ENCODE measurements at regions of chr5 and their contacts with region 1.

Region 1: GRCh38 chr5:134738133-134738962 is at the start of gene CAMLG:
- DNase-seq: peak; percentile 98
- H3K4me3 Mint-ChIP-seq: peak within 1 kb of the TSS; percentile 94
- H3K27ac Mint-ChIP-seq: peak within 1 kb of the TSS; percentile 90
- H3K4me1 Mint-ChIP-seq: peaks cover 32% of the 10 kb centered on the region
- H3K27me3 Mint-ChIP-seq: no peaks in the 10 kb centered on the region
- total RNA-seq, gene CAMLG: 25.9 and 26.9 TPM in 2 replicates

Region 2: GRCh38 chr5:133051580-133052332 is 1686.6 kb before region 1 on chr5 and contains the start of gene HSPA4:
- intact Hi-C with region 1: loop called (anchors 2 kb)
- DNase-seq: peak; percentile 96
- H3K4me3 Mint-ChIP-seq: peak within 1 kb of the TSS; percentile 96
- H3K27ac Mint-ChIP-seq: peak within 1 kb of the TSS; percentile 100
- H3K4me1 Mint-ChIP-seq: peaks cover 46% of the 10 kb centered on the region
- H3K27me3 Mint-ChIP-seq: peaks cover 2% of the 10 kb centered on the region
- total RNA-seq, gene HSPA4: 244 and 247 TPM in 2 replicates

Region 3: DNA sequence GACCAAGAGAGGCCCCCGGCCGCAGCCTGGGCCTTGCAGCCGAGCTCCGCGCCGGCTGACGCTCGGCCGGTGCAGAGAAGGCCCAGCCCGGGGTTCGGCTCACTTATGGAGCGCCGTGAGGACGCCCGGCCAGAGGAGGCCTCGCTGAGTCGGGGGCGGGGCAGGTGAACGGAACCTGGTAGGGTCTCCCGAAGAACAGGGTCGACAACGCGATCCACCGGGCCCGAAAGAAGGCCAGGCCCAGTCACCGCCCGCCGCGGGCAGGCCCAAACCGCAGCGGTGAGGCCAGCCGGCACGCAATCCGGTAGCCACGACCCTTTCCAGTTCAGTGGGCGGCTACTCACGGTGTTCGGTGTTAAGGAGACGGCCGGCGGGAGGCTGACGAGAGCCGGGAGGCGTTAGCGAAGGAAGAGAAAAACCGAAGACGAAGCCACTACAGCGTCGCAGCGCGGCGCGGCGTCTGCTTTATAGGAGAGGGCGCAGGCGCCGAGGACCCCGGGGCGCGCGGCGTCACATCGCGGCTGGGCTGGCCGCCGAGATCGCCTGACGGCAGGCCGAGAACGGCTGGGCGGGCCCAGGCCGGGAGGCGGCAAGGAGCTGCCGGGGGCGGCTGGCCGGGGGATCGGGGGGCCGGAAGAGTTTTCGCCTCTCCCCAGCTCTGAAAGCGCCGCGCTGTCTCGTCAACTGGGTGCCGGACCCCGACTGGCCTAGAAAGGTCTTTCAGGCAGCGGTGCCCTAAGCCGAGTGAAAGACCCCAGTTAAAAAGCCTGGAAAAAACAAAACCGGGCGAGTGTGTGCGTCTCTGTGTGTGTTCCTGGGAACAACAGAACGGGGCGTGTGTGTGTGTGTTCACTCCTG is 561.6 kb before region 1 on chr5 and contains the start of gene SKP1:
- intact Hi-C with region 1: loop called (anchors 1 kb)
- DNase-seq: peak; percentile 85
- H3K4me3 Mint-ChIP-seq: peak within 1 kb of the TSS; percentile 96
- H3K27ac Mint-ChIP-seq: peak within 1 kb of the TSS; percentile 97
- H3K4me1 Mint-ChIP-seq: peaks cover 28% of the 10 kb centered on the region
- H3K27me3 Mint-ChIP-seq: peaks cover 6% of the 10 kb centered on the region
- total RNA-seq, gene SKP1: 259 and 265 TPM in 2 replicates

Region 4: GRCh38 chr5:134436523-134437339 is 301.6 kb before region 1 on chr5:
- intact Hi-C with region 1: no loop called
- DNase-seq: peak; percentile 51
- H3K4me3 Mint-ChIP-seq: peak overlapping the region; percentile 10
- H3K27ac Mint-ChIP-seq: peak overlapping the region; percentile 77
- H3K4me1 Mint-ChIP-seq: peaks cover 26% of the 10 kb centered on the region
- H3K27me3 Mint-ChIP-seq: peaks cover 2% of the 10 kb centered on the region

Region 5: GRCh38 chr5:134555890-134556311 is 182.4 kb before region 1 on chr5:
- intact Hi-C with region 1: no loop called
- DNase-seq: peak; percentile 68
- H3K4me3 Mint-ChIP-seq: peak overlapping the region; percentile 76
- H3K27ac Mint-ChIP-seq: peak overlapping the region; percentile 97
- H3K4me1 Mint-ChIP-seq: peaks cover 33% of the 10 kb centered on the region
- H3K27me3 Mint-ChIP-seq: no peaks in the 10 kb centered on the region

Region 6: GRCh38 chr5:134609232-134609851 is 129.0 kb before region 1 on chr5:
- intact Hi-C with region 1: loop called (anchors 2 kb)
- DNase-seq: no peak
- H3K4me3 Mint-ChIP-seq: peak overlapping the region; percentile 67
- H3K27ac Mint-ChIP-seq: peak overlapping the region; percentile 96
- H3K4me1 Mint-ChIP-seq: peaks cover 48% of the 10 kb centered on the region
- H3K27me3 Mint-ChIP-seq: no peaks in the 10 kb centered on the region

Region 7: GRCh38 chr5:134758504-134759341 is 20.4 kb after region 1 on chr5 and contains the start of gene DDX46:
- intact Hi-C with region 1: loop called (anchors 1 kb)
- DNase-seq: peak; percentile 94
- H3K4me3 Mint-ChIP-seq: peak within 1 kb of the TSS; percentile 100
- H3K27ac Mint-ChIP-seq: peak within 1 kb of the TSS; percentile 99
- H3K4me1 Mint-ChIP-seq: peaks cover 28% of the 10 kb centered on the region
- H3K27me3 Mint-ChIP-seq: no peaks in the 10 kb centered on the region
- total RNA-seq, gene DDX46: 78.3 and 84.4 TPM in 2 replicates

Region 8: GRCh38 chr5:134873987-134874830 is 135.9 kb after region 1 on chr5 and contains the start of gene TXNDC15:
- intact Hi-C with region 1: loop called (anchors 1 kb)
- DNase-seq: peak; percentile 82
- H3K4me3 Mint-ChIP-seq: peak within 1 kb of the TSS; percentile 100
- H3K27ac Mint-ChIP-seq: peak within 1 kb of the TSS; percentile 98
- H3K4me1 Mint-ChIP-seq: peaks cover 43% of the 10 kb centered on the region
- H3K27me3 Mint-ChIP-seq: no peaks in the 10 kb centered on the region
- total RNA-seq, gene TXNDC15: 57.1 and 67.2 TPM in 2 replicates

Region 9: DNA sequence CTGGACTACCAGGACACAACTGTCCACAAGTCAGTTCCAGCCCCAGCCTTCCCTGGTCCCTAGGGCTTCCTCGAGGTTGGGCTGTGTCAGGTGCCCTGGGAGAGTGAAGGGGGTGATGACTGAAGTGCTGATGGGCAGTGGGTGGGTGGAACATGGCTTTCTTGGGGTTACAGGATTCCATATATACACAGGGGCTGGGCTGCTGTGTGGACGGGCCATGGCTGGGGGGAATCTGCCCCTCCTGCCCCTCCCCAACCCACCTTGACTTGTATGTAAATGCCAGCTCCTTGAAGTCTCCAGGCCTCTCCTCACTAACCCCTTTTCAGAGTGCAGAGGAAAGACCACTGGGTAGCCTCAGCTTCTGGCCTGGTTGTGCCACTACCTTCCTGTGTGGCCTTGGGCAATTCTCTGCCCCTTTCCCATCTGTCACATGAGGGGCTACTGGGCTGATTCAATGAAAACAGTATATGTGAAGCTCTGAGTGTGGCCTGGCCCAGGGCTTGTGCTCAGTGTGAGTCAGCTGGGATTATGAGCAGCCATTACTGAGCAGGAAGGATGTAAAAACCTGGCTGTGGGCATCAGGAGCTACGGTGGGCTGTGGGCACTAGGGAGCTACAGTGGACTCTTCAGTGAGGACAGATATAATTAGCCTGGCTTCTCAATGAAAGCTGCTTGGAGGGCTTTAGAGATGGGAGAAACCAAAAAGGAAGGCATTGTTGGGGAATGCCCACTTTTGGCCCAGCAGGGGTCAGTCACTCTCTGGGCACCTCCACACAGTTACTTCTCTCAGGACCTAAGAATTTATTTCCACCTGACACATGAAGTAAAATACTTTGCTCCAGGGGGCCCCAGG is 272.4 kb after region 1 on chr5:
- intact Hi-C with region 1: no loop called
- DNase-seq: no peak
- H3K4me3 Mint-ChIP-seq: no peak overlapping the region
- H3K27ac Mint-ChIP-seq: no peak overlapping the region
- H3K4me1 Mint-ChIP-seq: no peaks in the 10 kb centered on the region
- H3K27me3 Mint-ChIP-seq: peaks cover 3% of the 10 kb centered on the region

Region 10: DNA sequence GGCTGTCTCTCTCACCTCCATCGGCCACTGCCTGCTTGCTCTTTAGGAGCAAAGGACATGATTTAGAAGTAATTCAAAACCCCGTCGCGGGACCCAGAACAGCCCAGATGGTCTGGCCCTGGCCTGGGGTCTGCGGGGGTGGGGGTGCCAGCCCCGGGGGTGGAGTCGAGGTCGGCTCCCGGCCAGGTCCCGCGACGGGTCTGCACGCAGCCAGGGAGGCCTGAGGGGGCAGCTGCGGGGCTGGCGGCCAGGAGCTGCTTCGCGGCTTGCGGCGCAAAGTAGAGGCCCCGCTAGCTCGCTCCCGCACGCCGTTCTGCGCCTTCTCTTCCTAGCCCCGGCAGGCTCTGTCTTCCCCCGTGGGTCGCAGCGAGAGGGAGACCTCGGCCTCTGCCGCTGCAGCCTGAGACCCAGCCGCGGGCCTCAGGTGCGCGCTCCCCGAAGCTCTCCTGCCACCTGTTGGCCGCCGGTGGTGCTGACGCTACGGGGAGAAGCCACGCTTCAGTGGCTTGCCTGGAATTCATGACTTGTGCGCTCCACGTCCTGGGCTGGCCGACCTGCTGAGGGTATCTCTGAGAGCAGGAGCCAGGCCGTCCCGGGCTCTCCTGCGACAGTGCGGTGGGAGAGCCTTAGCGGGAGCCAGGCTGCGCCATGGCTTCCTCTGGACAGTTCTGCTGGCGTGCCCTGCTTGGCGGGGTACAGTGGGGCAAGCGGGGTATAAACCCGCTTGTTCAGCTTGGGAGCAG is 452.9 kb after region 1 on chr5:
- intact Hi-C with region 1: loop called (anchors 5 kb)
- DNase-seq: peak; percentile 63
- H3K4me3 Mint-ChIP-seq: peak overlapping the region; percentile 59
- H3K27ac Mint-ChIP-seq: no peak overlapping the region
- H3K4me1 Mint-ChIP-seq: no peaks in the 10 kb centered on the region
- H3K27me3 Mint-ChIP-seq: peaks cover 43% of the 10 kb centered on the region